GM18951 (cell line): ENCODE measurements at regions of chr4 and their contacts with region 1.

Region 1: GRCh38 chr4:37891260-37892159 is 626 bp downstream of the TBC1D1 start:
- POLR2A ChIP-seq: peak; percentile 53

Region 2: GRCh38 chr4:37441276-37441994 is 450.1 kb before region 1 on chr4:
- in situ Hi-C with region 1: no loop called
- POLR2A ChIP-seq: no peak

Region 3: GRCh38 chr4:37970487-37971101 is 79.1 kb after region 1 on chr4:
- in situ Hi-C with region 1: loop called (anchors 5 kb)
- POLR2A ChIP-seq: no peak

Region 4: DNA sequence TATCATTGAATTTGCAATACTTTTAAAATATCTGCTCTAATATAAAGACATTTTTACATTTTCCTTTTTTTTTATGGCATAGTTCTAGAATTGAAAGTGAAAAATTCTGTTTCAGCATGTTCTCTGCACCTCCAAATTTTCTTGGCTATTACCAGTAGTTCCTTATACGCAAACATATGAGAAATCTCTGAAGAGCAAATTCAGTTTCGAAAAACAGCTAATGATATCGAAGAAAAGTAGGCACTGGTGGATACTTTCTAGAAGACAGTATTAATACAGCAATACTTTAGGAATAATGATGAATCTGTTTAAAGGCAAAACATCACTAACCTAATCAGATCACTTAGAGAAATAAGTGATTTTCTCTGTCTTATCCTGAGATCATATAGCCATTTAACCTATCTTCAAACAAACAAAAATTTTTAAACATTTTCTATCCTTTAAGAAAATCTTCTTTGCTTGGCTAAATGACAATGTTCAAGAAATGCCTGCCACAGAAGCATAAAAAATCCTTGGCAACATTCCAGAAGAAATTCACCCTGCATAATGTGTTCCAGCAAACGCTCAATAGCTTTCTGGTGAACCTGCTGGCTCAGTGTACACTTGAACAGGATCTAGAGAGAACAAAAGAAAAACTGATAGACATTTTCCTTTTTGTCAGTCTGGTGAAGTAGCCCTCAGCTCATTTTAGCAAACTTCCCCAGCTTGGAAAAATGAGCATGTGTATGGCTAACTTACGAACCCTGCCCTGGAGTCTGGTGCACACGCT is 721.3 kb after region 1 on chr4:
- in situ Hi-C with region 1: no loop called
- POLR2A ChIP-seq: no peak